Mammary epithelial cell (primary cell): ENCODE measurements at regions of chr5 and their contacts with region 1.

Region 1: GRCh38 chr5:149667084-149667828 is 62.9 kb upstream of the PPARGC1B start:
- DNase-seq: peak; percentile 19
- H3K4me3 ChIP-seq: no peak overlapping the region
- H3K27ac ChIP-seq: no peak overlapping the region
- H3K4me1 ChIP-seq: no peaks in the 10 kb centered on the region
- H3K27me3 ChIP-seq: no peaks in the 10 kb centered on the region
- CTCF ChIP-seq: peak; percentile 78 to 91

Region 2: GRCh38 chr5:149317281-149318048 is 349.8 kb before region 1 on chr5:
- CTCF ChIA-PET with region 1: no interaction called
- dilution Hi-C with region 1: no loop called
- in situ Hi-C with region 1: no loop called
- intact Hi-C with region 1: no loop called
- DNase-seq: peak; percentile 37
- H3K4me3 ChIP-seq: no peak overlapping the region
- H3K27ac ChIP-seq: no peak overlapping the region
- H3K4me1 ChIP-seq: peaks cover 20% of the 10 kb centered on the region
- H3K27me3 ChIP-seq: no peaks in the 10 kb centered on the region
- CTCF ChIP-seq: peak; percentile 74 to 75

Region 3: DNA sequence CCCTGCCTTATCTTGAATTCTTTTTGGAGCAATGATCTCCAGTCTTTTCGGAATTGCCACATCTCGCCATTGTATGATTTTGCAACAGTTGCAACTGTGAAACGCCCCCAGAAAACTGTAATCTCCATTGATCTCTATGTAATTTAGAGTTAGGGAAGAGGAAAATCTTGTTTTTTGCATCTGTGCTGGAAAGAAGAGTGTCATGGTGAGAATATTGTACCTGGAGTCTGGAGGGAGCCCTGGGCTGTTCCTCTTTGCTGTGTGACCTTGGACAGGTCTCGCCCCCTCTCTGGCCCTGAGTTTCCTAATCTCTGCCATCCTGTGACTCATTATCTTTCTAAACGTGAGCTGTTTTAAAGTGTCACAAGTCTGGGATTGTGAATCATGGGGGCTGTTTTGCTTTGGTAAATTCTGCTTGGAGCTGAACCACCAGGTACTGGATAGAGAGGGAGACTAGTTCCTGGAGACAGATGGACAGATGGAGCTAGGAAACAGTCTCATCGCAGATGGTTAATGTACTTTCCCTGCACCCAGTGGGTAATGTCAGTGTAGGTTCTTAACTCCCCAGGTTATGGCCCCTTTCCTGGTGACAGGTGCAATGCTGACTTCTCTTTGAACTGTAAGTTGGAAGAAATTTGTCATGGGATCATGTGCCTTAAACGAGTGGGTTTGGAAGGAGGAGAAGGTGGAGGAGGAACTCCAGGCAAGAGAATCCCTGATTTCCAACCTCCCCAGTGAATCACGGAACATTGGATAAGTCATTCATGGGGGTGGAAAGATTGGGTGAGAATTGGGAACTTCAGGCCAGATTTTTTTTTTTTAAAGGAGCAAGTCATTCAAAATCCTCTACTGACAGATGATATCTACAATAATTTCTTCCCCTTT is 82.5 kb after region 1 on chr5:
- CTCF ChIA-PET with region 1: no interaction called
- dilution Hi-C with region 1: loop called (anchors 5 kb)
- in situ Hi-C with region 1: no loop called
- intact Hi-C with region 1: no loop called
- DNase-seq: peak; percentile 48
- H3K4me3 ChIP-seq: no peak overlapping the region
- H3K27ac ChIP-seq: no peak overlapping the region
- H3K4me1 ChIP-seq: peaks cover 25% of the 10 kb centered on the region
- H3K27me3 ChIP-seq: no peaks in the 10 kb centered on the region
- CTCF ChIP-seq: no peak

Region 4: GRCh38 chr5:149775785-149776184 is 108.5 kb after region 1 on chr5:
- CTCF ChIA-PET with region 1: interaction called, 14 read pairs
- dilution Hi-C with region 1: no loop called
- in situ Hi-C with region 1: no loop called
- intact Hi-C with region 1: no loop called
- DNase-seq: peak; percentile 20
- H3K4me3 ChIP-seq: no peak overlapping the region
- H3K27ac ChIP-seq: no peak overlapping the region
- H3K4me1 ChIP-seq: peaks cover 40% of the 10 kb centered on the region
- H3K27me3 ChIP-seq: no peaks in the 10 kb centered on the region
- CTCF ChIP-seq: peak; percentile 48 to 51

Region 5: GRCh38 chr5:149828161-149828884 is 161.1 kb after region 1 on chr5:
- CTCF ChIA-PET with region 1: interaction called, 4 read pairs
- dilution Hi-C with region 1: no loop called
- in situ Hi-C with region 1: loop called in 1 of 2 experiments (anchors 10 kb)
- intact Hi-C with region 1: loop called (anchors 1 kb)
- DNase-seq: peak; percentile 89
- H3K4me3 ChIP-seq: no peak overlapping the region
- H3K27ac ChIP-seq: no peak overlapping the region
- H3K4me1 ChIP-seq: no peaks in the 10 kb centered on the region
- H3K27me3 ChIP-seq: no peaks in the 10 kb centered on the region
- CTCF ChIP-seq: peak; percentile 90 to 95

Region 6: DNA sequence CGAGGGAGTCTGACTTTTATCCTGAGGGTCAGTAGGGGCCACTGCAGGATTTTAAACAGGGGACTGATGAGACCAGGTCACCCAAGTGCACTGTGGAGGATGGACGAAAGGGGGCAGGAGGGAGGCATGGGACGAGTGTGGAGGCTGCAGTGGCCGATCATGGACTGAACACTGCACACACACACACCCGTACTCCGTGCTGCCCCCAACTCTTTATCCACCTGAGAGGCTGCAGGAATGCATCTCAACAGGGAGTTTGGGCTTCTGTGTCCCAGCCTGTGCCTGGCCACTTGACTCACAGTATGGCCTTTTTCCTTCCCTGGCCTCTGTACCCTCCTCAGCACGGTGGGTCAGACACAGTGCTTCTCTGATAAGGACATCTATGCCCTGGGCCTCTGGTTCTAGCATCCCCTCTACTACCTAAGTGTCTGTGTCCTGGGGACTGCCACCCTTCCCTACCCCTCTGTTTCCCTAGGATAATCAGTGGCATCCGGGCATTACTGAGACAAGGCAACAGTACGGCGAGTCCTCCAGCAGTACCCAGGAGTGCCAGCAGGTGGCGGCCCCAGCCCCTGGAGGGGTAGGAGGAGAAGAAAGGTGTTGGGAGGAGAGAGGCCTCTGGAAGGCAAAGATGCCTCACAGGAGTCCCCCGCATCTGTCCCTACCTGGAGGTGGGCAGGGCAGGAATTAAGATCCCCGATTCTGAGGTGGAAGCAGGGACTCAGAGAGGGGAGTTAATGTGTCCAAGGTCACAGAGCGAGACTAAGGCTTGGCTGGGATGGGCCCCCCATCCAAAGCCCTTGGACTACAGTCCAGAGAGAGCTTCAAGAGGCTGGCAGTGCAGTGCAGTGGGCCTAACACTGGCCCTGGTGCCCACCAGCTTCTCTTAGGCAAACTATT is 494.2 kb after region 1 on chr5:
- CTCF ChIA-PET with region 1: no interaction called
- dilution Hi-C with region 1: no loop called
- in situ Hi-C with region 1: no loop called
- intact Hi-C with region 1: no loop called
- DNase-seq: peak; percentile 55
- H3K4me3 ChIP-seq: no peak overlapping the region
- H3K27ac ChIP-seq: no peak overlapping the region
- H3K4me1 ChIP-seq: no peaks in the 10 kb centered on the region
- H3K27me3 ChIP-seq: no peaks in the 10 kb centered on the region
- CTCF ChIP-seq: peak; percentile 96 to 98

Region 7: GRCh38 chr5:150538007-150538917 is 871.0 kb after region 1 on chr5:
- CTCF ChIA-PET with region 1: no interaction called
- dilution Hi-C with region 1: no loop called
- in situ Hi-C with region 1: no loop called
- intact Hi-C with region 1: no loop called
- DNase-seq: peak; percentile 70
- H3K4me3 ChIP-seq: no peak overlapping the region
- H3K27ac ChIP-seq: no peak overlapping the region
- H3K4me1 ChIP-seq: peaks cover 36% of the 10 kb centered on the region
- H3K27me3 ChIP-seq: no peaks in the 10 kb centered on the region
- CTCF ChIP-seq: no peak